Sigmoid colon (tissue), 7 donors: ENCODE measurements at regions of chr1 and their contacts with region 1.

Region 1: DNA sequence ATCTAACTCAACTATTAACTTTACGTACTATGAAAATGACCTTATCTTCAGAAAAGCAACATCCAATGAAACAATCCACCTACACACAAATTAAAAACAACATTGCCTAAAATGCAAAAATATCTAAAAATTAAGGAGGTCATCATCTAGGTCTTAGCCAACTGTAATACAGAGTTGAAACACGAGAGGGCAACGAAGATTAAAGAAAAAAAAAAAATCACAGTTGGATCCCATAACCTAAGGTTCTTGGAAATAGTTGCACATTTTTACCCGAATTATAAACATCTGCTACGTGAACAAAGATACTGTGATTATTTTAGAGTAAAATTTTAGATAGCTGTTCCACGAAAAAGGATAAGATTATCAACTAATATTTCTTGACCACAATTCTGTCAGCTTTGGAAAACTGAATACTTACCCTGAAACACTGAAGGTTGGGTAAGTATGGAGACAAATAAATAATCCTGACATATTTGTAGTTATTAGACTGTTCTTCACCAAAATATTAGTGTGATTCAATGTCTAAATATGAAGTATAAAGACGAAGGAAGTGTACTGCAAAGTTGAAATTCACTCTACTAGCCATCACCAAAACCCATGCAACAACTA is 88.0 kb upstream of the AK4 start:
- DNase-seq: no peak
- H3K4me3 ChIP-seq: no peak overlapping the region
- H3K27ac ChIP-seq: peak overlapping the region in 3 of 4 donors; percentile 7 to 18 (median 13)
- H3K4me1 ChIP-seq: peaks cover 0 to 93% (median 67%) of the 10 kb centered on the region in 4 donors
- H3K27me3 ChIP-seq: no peaks in the 10 kb centered on the region
- CTCF ChIP-seq: peak; percentile 24 to 68 (median 66)
- EP300 ChIP-seq: no peak
- POLR2A ChIP-seq: no peak

Region 2: DNA sequence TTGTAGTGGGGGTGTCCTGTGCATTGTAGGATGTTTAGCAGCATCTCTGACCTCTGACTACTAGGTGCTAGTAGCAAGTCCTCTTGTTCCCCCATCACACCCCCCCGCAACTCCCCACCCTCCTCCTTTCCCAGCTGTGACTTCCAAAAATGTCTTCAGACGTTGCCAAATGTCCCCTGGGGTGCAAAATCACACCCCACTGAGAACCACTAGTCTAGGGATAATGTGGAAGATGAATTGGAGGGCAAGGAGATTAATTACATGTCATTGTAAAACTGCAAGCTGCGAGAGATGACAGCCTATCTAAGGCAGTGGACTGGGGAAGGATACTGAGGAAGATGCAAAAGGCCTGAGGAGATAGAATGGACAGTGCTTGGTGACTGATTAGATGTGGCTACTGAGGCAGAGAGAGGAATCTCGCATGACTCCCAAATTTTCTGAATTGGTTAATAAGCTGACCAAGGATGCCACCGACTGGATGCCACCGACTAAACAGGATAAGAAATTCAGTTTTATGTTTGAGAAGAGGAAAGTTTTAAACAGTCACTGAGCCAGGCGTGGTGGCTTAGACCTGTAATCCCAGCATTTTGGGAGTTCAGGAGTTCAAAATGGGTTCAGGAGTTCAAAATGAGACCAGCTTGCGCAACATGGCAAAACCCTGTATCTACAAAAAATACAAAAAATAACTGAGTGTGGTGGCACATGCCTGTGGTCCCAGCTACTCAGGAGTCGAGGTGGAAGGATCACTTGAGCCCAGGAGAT is 90.5 kb before region 1 on chr1:
- intact Hi-C with region 1: no loop called
- DNase-seq: no peak
- H3K4me3 ChIP-seq: no peak overlapping the region
- H3K27ac ChIP-seq: no peak overlapping the region
- H3K4me1 ChIP-seq: peaks cover 0 to 13% (median 10%) of the 10 kb centered on the region in 4 donors
- H3K27me3 ChIP-seq: no peaks in the 10 kb centered on the region
- CTCF ChIP-seq: no peak
- EP300 ChIP-seq: no peak
- POLR2A ChIP-seq: no peak

Region 3: GRCh38 chr1:65213271-65214023 is 153.4 kb after region 1 on chr1:
- intact Hi-C with region 1: loop called (anchors 5 kb)
- DNase-seq: no peak
- H3K4me3 ChIP-seq: no peak overlapping the region
- H3K27ac ChIP-seq: no peak overlapping the region
- H3K4me1 ChIP-seq: peaks cover 0 to 12% (median 6%) of the 10 kb centered on the region in 4 donors
- H3K27me3 ChIP-seq: no peaks in the 10 kb centered on the region
- CTCF ChIP-seq: no peak
- EP300 ChIP-seq: no peak
- POLR2A ChIP-seq: no peak